ENCODE measurements at regions of chr10 and their contacts with region 1.

Region 1: DNA sequence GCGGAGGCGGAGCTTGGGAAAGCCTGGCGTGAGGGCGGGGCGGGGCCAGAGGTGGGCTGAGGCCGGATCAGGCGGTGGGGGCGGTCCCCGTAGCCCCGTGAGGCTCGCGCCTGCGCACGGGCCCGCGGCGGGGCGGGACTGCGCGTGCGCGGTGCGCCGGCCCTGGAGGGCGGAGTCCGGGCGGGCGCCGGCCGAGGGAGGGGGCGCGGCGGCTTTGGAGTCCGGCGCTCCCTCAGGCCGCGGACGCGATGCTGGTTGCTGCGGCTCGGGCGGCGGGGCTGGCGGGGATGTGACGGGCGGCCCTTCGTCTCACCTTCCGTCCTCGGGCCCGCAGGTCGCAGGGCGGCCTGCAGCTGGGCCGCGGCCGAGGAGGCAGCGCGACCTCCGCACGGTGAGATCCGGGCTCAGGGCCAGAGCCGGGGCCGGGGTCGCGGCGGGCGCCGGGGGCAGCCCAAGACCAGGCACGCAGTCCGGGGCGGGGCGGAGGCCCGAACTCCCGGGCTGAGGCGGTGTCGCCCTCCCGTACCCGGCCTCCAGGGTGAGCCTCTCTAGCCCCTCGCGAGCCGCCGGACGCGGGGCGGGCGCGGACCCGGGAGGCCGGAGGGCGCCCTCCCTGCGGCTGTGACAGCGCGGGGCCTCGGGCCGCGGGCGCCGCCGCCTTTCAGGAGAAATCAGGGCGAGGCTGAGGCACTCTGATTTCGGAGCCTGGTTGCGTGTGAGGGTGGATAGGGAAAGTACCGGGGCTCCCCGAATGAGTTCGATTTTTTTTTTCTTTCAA is at the start of gene CCSER2:
- DNase-seq: peak; percentile 99
- ATAC-seq: peak; percentile 80
- H3K4me3 Mint-ChIP-seq: peak within 1 kb of the TSS; percentile 89
- H3K27ac Mint-ChIP-seq: peak within 1 kb of the TSS; percentile 94
- H3K4me1 Mint-ChIP-seq: peaks cover 20% of the 10 kb centered on the region
- H3K27me3 Mint-ChIP-seq: no peaks in the 10 kb centered on the region
- CTCF ChIP-seq: no peak
- total RNA-seq, gene CCSER2: 56.9 to 57.5 TPM

Region 2: GRCh38 chr10:84341538-84341856 is 12.9 kb after region 1 on chr10:
- CTCF ChIA-PET with region 1: interaction called, 5 read pairs
- POLR2A ChIA-PET with region 1: interaction called, 13 read pairs
- intact Hi-C with region 1: no loop called
- DNase-seq: peak; percentile 52
- ATAC-seq: no peak
- H3K4me3 Mint-ChIP-seq: no peak overlapping the region
- H3K27ac Mint-ChIP-seq: peak overlapping the region; percentile 76
- H3K4me1 Mint-ChIP-seq: peaks cover 58% of the 10 kb centered on the region
- H3K27me3 Mint-ChIP-seq: no peaks in the 10 kb centered on the region
- CTCF ChIP-seq: no peak

Region 3: GRCh38 chr10:84469470-84469869 is 140.9 kb after region 1 on chr10:
- CTCF ChIA-PET with region 1: no interaction called
- POLR2A ChIA-PET with region 1: no interaction called
- intact Hi-C with region 1: no loop called
- DNase-seq: no peak
- ATAC-seq: no peak
- H3K4me3 Mint-ChIP-seq: no peak overlapping the region
- H3K27ac Mint-ChIP-seq: no peak overlapping the region
- H3K4me1 Mint-ChIP-seq: peaks cover 6% of the 10 kb centered on the region
- H3K27me3 Mint-ChIP-seq: no peaks in the 10 kb centered on the region
- CTCF ChIP-seq: no peak